ENCODE measurements at regions of chr9 and their contacts with region 1.

Region 1: GRCh38 chr9:33676746-33677505 is 118.4 kb upstream of the PRSS3 start:
- DNase-seq: no peak
- ATAC-seq: peak; percentile 65
- H3K4me3 ChIP-seq: peak overlapping the region; percentile 47
- H3K27ac ChIP-seq: no peak overlapping the region
- H3K4me1 ChIP-seq: no peaks in the 10 kb centered on the region
- H3K27me3 ChIP-seq: peaks cover 0 to 5% of the 10 kb centered on the region in 2 experiments; a peak in 2 of 4 replicates
- CTCF ChIP-seq: no peak
- EP300 ChIP-seq: no peak
- POLR2A ChIP-seq: no peak
- RAD21 ChIP-seq: no peak

Region 2: GRCh38 chr9:33721674-33722358 is 44.9 kb after region 1 on chr9:
- CTCF ChIA-PET with region 1: no interaction called
- POLR2A ChIA-PET with region 1: no interaction called
- RAD21 ChIA-PET with region 1: no interaction called
- SMC1A ChIA-PET with region 1: no interaction called
- in situ Hi-C with region 1: no loop called
- intact Hi-C with region 1: loop called (anchors 5 kb)
- DNase-seq: peak; percentile 17
- ATAC-seq: peak; percentile 86
- H3K4me3 ChIP-seq: no peak overlapping the region
- H3K27ac ChIP-seq: no peak overlapping the region
- H3K4me1 ChIP-seq: no peaks in the 10 kb centered on the region
- H3K27me3 ChIP-seq: no peaks in the 10 kb centered on the region
- CTCF ChIP-seq: peak; percentile 99 to 100 (median 100)
- EP300 ChIP-seq: no peak
- POLR2A ChIP-seq: no peak
- RAD21 ChIP-seq: peak; percentile 89

Region 3: GRCh38 chr9:33992632-33993031 is 315.7 kb after region 1 on chr9:
- CTCF ChIA-PET with region 1: no interaction called
- POLR2A ChIA-PET with region 1: no interaction called
- RAD21 ChIA-PET with region 1: no interaction called
- SMC1A ChIA-PET with region 1: no interaction called
- in situ Hi-C with region 1: no loop called
- intact Hi-C with region 1: no loop called
- DNase-seq: no peak
- ATAC-seq: no peak
- H3K4me3 ChIP-seq: no peak overlapping the region
- H3K27ac ChIP-seq: no peak overlapping the region
- H3K4me1 ChIP-seq: peaks cover 13% of the 10 kb centered on the region
- H3K27me3 ChIP-seq: no peaks in the 10 kb centered on the region
- CTCF ChIP-seq: no peak
- EP300 ChIP-seq: no peak
- POLR2A ChIP-seq: no peak
- RAD21 ChIP-seq: no peak

Measured in GM12878 (cell line).